ENCODE measurements at regions of chr15 and their contacts with region 1.

Region 1: GRCh38 chr15:38440353-38441129 is 13.4 kb upstream of the FAM98B start:
- DNase-seq: peak in 4 of 5 donors; percentile 28 to 64 (median 54)
- H3K4me3 ChIP-seq: no peak overlapping the region
- H3K4me3 Mint-ChIP-seq: no peak overlapping the region
- H3K27ac ChIP-seq: no peak overlapping the region
- H3K27ac Mint-ChIP-seq: peak overlapping the region in 2 of 8 donors; percentile 12 to 56
- H3K4me1 ChIP-seq: no peaks in the 10 kb centered on the region
- H3K4me1 Mint-ChIP-seq: peaks cover 4 to 6% (median 4%) of the 10 kb centered on the region in 3 donors
- H3K27me3 ChIP-seq: no peaks in the 10 kb centered on the region
- H3K27me3 Mint-ChIP-seq: peaks cover 16 to 37% of the 10 kb centered on the region in 2 donors

Region 2: GRCh38 chr15:38427380-38427779 is 13.2 kb before region 1 on chr15:
- CTCF ChIA-PET with region 1: interaction called, 11 read pairs
- POLR2A ChIA-PET with region 1: no interaction called
- DNase-seq: no peak
- H3K4me3 ChIP-seq: no peak overlapping the region
- H3K4me3 Mint-ChIP-seq: no peak overlapping the region
- H3K27ac ChIP-seq: no peak overlapping the region
- H3K27ac Mint-ChIP-seq: peak overlapping the region in 1 of 8 donors; percentile 44
- H3K4me1 ChIP-seq: no peaks in the 10 kb centered on the region
- H3K4me1 Mint-ChIP-seq: no peaks in the 10 kb centered on the region
- H3K27me3 ChIP-seq: no peaks in the 10 kb centered on the region
- H3K27me3 Mint-ChIP-seq: peaks cover 10 to 32% of the 10 kb centered on the region in 2 donors

Region 3: GRCh38 chr15:38453971-38454695 is 13.6 kb after region 1 on chr15 and contains the start of gene FAM98B:
- CTCF ChIA-PET with region 1: interaction called, 37 read pairs
- POLR2A ChIA-PET with region 1: no interaction called
- DNase-seq: peak; percentile 68 to 87 (median 80)
- H3K4me3 ChIP-seq: peak within 1 kb of the TSS; percentile 66
- H3K4me3 Mint-ChIP-seq: peak within 1 kb of the TSS; percentile 94 to 99 (median 97)
- H3K27ac ChIP-seq: peak within 1 kb of the TSS; percentile 89
- H3K27ac Mint-ChIP-seq: peak within 1 kb of the TSS; percentile 91 to 98 (median 96)
- H3K4me1 ChIP-seq: peaks cover 17% of the 10 kb centered on the region
- H3K4me1 Mint-ChIP-seq: peaks cover 33 to 45% (median 36%) of the 10 kb centered on the region in 3 donors
- H3K27me3 ChIP-seq: no peaks in the 10 kb centered on the region
- H3K27me3 Mint-ChIP-seq: peaks cover 0 to 3% of the 10 kb centered on the region in 2 donors
- total RNA-seq, gene FAM98B: 56.7 to 60.9 TPM

Region 4: GRCh38 chr15:38724827-38725226 is 284.3 kb after region 1 on chr15:
- CTCF ChIA-PET with region 1: interaction called, 17 read pairs
- POLR2A ChIA-PET with region 1: no interaction called
- DNase-seq: no peak
- H3K4me3 ChIP-seq: no peak overlapping the region
- H3K4me3 Mint-ChIP-seq: no peak overlapping the region
- H3K27ac ChIP-seq: no peak overlapping the region
- H3K27ac Mint-ChIP-seq: no peak overlapping the region
- H3K4me1 ChIP-seq: no peaks in the 10 kb centered on the region
- H3K4me1 Mint-ChIP-seq: no peaks in the 10 kb centered on the region
- H3K27me3 ChIP-seq: no peaks in the 10 kb centered on the region
- H3K27me3 Mint-ChIP-seq: peaks cover 0 to 3% of the 10 kb centered on the region in 2 donors

Measured in CD8-positive, alpha-beta memory T cell (primary cell).